Right cardiac atrium (tissue), 5 donors: ENCODE measurements at regions of chr2 and their contacts with region 1.

Region 1: DNA sequence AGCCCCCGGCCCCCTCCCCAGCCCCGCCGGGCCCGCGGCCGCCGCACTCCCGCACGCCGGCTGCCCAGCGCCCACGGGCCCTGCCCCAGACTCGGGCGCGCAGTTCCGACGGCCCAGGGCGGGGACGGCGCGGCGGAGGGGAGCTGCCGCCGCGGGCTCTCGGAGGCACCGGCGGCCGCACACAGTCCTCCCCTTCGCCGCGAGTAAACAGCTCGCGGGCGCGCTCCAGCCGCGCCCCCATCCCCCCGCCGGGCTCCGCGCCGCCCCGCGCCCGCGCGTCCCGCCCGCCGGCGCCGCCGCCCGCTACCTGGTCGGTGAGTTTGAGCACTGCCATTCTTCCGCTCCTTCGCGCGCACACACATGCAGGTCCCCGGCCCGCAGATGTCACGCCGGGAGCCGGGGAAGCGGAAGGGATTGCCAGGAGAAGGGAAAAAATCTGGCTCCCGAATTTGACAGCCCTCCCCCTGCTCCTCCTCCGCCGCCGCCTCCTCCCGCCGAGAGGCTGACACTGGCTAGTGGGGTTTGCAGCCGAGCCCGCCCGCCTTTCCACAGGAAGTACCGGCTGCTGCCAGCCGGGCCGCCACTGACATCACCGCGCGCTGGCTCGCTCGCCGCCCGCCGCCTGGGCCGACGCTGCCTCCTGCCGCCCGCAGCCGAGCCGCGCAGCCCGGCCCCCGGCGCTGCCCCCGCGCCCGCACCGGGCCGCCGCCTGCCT is at the start of gene ANKRD44:
- DNase-seq: peak; percentile 94 to 97 (median 97)
- ATAC-seq: peak; percentile 98 to 99
- H3K4me3 ChIP-seq: peak within 1 kb of the TSS; percentile 87
- H3K27ac ChIP-seq: peak within 1 kb of the TSS; percentile 75
- H3K4me1 ChIP-seq: peaks cover 8% of the 10 kb centered on the region
- H3K27me3 ChIP-seq: no peaks in the 10 kb centered on the region
- total RNA-seq, gene ANKRD44: 13.9 to 18.8 (median 14.5) TPM

Region 2: GRCh38 chr2:197011799-197012641 is 298.4 kb before region 1 on chr2:
- intact Hi-C with region 1: loop called in 1 of 4 experiments (anchors 10 kb)
- DNase-seq: no peak
- ATAC-seq: peak; percentile 74 to 81
- H3K4me3 ChIP-seq: no peak overlapping the region
- H3K27ac ChIP-seq: no peak overlapping the region
- H3K4me1 ChIP-seq: no peaks in the 10 kb centered on the region
- H3K27me3 ChIP-seq: no peaks in the 10 kb centered on the region

Region 3: DNA sequence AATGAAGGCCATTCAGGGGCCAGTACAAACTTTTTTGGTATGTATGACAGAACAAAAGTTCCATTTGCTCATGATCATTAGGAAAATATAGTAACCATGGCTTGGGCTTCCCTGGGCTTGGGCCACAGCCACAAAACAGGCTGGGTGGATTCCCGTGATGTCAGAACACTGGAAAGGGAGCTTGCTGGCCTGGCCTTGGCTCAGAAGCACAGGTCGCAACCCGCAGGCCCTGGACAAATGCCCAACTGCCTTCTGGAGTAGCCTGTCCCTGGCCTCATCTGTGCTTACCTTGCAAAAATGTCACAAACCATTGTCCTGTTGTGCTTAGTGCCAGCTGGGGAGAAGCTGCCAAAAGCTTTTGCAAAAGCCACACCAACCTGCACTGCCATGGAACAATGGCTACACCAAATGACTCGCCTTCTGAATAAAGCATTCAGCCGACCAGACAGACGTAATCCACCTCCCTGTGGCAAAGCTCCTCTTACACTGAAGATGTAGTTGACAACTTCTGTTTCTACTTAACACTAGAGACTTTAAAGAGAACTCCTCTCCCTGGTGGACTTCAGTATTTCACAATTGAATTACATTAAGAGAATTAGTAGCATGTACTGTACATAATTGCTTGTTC is 125.4 kb before region 1 on chr2:
- intact Hi-C with region 1: loop called (anchors 5 kb)
- DNase-seq: peak; percentile 88 to 94 (median 91)
- ATAC-seq: peak; percentile 94
- H3K4me3 ChIP-seq: no peak overlapping the region
- H3K27ac ChIP-seq: no peak overlapping the region
- H3K4me1 ChIP-seq: peaks cover 4% of the 10 kb centered on the region
- H3K27me3 ChIP-seq: no peaks in the 10 kb centered on the region

Region 4: DNA sequence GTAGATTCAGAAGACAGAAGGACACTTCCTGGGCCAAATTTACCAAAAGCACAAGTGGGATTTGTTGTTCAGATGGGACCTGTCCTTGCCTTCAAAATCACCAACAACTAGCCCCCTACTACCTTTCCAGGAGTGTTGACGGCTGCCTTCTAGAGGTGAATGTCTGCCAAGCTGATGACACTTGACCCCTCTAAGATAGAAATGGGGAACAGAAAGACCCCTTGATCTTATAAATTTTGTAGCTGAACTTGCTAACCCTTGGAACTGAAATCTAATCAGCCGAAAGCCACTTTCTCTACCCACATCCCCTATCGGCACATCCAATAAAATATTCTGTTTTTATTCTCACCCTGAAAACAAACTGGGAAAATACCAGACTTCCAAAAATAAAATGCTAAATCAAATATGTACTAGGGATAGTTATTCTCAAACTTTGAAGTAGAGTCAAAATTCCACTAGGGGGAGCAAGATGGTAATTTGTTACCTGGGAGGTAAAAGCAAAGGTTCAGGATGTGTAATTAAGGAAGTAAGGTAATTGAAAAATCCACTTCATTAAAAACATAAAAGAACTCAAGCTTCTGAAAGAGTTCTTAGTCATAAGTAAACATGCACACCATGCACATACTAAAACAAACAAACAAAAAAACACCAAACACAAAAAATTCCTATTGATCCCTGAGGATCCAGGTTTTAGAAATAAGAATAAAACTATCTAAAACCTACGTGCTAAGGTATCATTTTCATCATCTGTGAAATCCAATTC is 119.1 kb before region 1 on chr2:
- intact Hi-C with region 1: loop called (anchors 5 kb)
- DNase-seq: no peak
- ATAC-seq: no peak
- H3K4me3 ChIP-seq: no peak overlapping the region
- H3K27ac ChIP-seq: no peak overlapping the region
- H3K4me1 ChIP-seq: peaks cover 4% of the 10 kb centered on the region
- H3K27me3 ChIP-seq: no peaks in the 10 kb centered on the region